Activated CD8-positive, alpha-beta T cell treated with anti-CD3 and anti-CD28 coated beads, Interleukin-2, amount 10 ng/mL, durations not matched to agents 7 days and 5 days (primary cell): ENCODE measurements at regions of chr7 and their contacts with region 1.

Region 1: DNA sequence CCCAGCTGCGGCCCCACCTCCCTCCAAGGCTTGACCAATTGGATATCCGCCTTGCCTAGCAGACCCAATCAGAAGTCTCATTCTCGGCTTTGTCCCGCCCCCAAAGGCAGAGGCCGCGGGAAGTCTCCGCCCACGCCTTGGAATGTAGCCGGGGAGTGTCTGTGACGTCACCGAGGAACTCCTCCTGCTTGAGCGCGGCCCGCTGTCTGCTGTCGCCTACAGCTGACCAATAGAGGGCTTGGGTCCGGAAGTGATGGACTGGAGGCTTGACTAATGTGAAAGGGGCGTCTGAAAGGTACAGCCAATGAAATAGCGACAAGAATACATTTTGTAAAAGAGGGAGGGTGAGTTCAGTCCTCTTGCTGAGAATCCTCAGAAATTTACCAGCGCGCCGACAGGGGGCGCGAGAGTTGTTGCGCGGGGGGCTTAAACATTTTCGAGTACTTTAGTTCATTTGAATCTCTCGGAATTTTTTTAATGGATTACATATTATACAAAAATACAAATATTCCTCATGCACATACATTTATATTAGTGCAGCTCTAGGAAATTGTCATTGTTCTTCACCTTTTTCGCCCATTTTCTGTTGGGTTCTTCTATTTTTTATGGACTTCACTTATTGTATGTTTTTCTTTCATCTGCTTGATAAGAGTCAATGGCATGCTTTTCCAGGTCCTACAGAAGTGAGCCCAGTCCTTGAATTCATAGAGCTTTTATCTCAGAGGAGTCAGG is 376 bp upstream of the CREB3L2 start:
- DNase-seq: peak; percentile 98
- ATAC-seq: peak; percentile 96
- H3K4me3 Mint-ChIP-seq: peak overlapping the region; percentile 96
- H3K27ac Mint-ChIP-seq: peak overlapping the region; percentile 94
- H3K4me1 Mint-ChIP-seq: peaks cover 35% of the 10 kb centered on the region
- H3K27me3 Mint-ChIP-seq: no peaks in the 10 kb centered on the region

Region 2: GRCh38 chr7:137898839-137899721 is 103.2 kb before region 1 on chr7:
- CTCF ChIA-PET with region 1: interaction called, 348 read pairs
- POLR2A ChIA-PET with region 1: no interaction called
- DNase-seq: peak; percentile 84
- ATAC-seq: peak; percentile 95
- H3K4me3 Mint-ChIP-seq: peak overlapping the region; percentile 50
- H3K27ac Mint-ChIP-seq: peak overlapping the region; percentile 80
- H3K4me1 Mint-ChIP-seq: peaks cover 33% of the 10 kb centered on the region
- H3K27me3 Mint-ChIP-seq: no peaks in the 10 kb centered on the region

Region 3: DNA sequence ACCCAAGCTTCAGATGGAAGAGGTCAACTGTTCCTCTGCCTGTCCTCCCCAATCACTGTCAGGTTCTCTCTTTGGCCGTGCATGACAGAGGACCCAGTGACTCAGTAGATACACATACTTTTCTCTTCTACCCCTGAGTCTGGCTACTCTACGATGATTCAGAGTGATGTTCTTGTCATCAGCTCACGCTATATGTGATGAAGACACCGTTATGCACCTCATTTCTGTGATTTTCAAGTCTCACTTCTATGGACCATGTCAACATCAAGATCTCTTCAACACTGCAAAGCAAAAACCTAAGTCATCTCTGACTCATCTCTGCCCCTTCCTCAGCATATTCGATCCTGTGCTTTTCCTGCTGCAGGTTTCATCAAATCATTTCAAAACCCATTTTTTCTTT is 78.9 kb before region 1 on chr7:
- CTCF ChIA-PET with region 1: interaction called, 20 read pairs
- POLR2A ChIA-PET with region 1: no interaction called
- DNase-seq: no peak
- ATAC-seq: no peak
- H3K4me3 Mint-ChIP-seq: no peak overlapping the region
- H3K27ac Mint-ChIP-seq: no peak overlapping the region
- H3K4me1 Mint-ChIP-seq: peaks cover 11% of the 10 kb centered on the region
- H3K27me3 Mint-ChIP-seq: no peaks in the 10 kb centered on the region

Region 4: GRCh38 chr7:137949416-137950262 is 52.6 kb before region 1 on chr7:
- CTCF ChIA-PET with region 1: interaction called, 10 read pairs
- POLR2A ChIA-PET with region 1: no interaction called
- DNase-seq: no peak
- ATAC-seq: no peak
- H3K4me3 Mint-ChIP-seq: no peak overlapping the region
- H3K27ac Mint-ChIP-seq: no peak overlapping the region
- H3K4me1 Mint-ChIP-seq: peaks cover 11% of the 10 kb centered on the region
- H3K27me3 Mint-ChIP-seq: no peaks in the 10 kb centered on the region

Region 5: GRCh38 chr7:138023618-138024342 is 21.5 kb after region 1 on chr7:
- CTCF ChIA-PET with region 1: interaction called, 31 read pairs
- POLR2A ChIA-PET with region 1: no interaction called
- DNase-seq: no peak
- ATAC-seq: peak; percentile 68
- H3K4me3 Mint-ChIP-seq: no peak overlapping the region
- H3K27ac Mint-ChIP-seq: peak overlapping the region; percentile 81
- H3K4me1 Mint-ChIP-seq: peaks cover 16% of the 10 kb centered on the region
- H3K27me3 Mint-ChIP-seq: no peaks in the 10 kb centered on the region

Region 6: DNA sequence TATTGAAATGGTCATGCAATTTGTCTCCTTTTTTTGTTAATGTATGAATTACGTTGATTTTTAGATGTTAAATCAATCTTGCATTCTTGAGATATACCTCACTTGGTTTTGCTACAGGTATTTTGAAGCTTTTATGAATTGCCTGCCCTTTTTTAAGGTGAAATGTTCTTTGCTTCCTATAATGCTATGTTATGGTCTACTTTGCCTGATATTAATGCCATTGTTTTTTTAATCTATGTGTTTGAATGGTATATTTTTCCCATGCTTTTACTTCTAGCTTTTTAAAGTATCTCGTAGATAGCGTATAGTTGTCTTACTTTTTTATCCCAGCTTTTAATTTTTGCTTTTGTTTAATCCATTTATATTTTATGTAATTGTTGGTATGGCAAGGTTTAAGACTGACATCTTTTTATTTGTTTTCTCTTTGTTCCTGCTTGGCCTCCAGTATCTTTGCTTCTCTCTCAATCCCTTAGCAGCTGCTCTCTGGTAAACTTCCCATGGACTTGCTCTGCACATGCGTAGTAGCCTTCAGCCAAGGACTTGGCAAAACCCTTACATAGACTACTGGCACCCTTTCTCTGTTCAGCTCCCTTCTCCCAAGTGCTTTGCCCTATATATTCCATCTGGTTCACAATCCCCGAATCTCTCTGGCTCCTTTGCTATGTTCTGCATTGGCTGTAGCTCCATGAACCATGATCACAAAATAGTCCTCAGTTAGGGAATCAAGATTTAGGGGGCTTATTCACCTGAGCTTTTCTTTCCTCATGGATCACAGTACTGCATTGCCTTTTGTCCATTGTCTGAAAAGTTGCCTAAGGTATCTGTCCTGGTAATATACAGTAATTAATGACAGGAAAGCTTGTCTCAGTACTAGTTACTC is 466.2 kb after region 1 on chr7:
- CTCF ChIA-PET with region 1: no interaction called
- POLR2A ChIA-PET with region 1: no interaction called
- DNase-seq: no peak
- ATAC-seq: no peak
- H3K4me3 Mint-ChIP-seq: no peak overlapping the region
- H3K27ac Mint-ChIP-seq: no peak overlapping the region
- H3K4me1 Mint-ChIP-seq: peaks cover 20% of the 10 kb centered on the region
- H3K27me3 Mint-ChIP-seq: no peaks in the 10 kb centered on the region